OCI-LY7 (cell line): ENCODE measurements at regions of chr2 and their contacts with region 1.

Region 1: DNA sequence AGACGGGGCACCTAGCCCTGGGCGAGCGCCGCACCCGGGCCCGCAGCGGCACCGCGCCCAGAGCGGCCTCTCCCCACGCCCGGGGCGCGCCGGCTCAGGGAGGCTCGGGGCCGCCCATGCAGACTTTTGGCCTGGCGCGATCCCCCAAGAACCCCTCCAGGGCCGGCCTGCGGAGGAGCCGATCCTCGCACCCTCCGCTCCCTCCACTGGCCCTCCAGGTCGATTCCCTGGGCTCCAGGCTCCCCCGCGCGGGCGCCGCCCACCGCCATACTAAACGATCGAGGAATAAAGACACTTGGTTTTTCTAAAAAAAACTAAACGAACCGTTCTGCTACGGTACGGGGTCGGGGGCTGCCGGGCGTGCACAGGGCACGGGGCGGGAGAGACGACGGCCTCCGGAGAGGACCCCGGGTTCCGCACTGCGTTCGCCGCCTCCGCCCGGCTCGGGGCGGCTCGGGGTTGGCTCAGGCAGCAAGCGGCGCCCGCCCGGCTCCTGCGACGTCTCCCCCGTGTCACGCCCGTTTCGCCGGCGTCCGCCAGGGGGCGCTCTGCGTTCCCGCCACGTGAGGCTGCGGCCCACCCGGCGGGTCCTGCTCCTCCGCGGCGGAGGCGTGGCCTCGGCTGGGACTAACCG is 365 bp upstream of the KHK start:
- DNase-seq: peak; percentile 97
- H3K4me3 ChIP-seq: peak overlapping the region; percentile 73
- H3K27ac ChIP-seq: peak overlapping the region; percentile 38
- H3K4me1 ChIP-seq: peaks cover 46% of the 10 kb centered on the region
- CTCF ChIP-seq: peak; percentile 79

Region 2: DNA sequence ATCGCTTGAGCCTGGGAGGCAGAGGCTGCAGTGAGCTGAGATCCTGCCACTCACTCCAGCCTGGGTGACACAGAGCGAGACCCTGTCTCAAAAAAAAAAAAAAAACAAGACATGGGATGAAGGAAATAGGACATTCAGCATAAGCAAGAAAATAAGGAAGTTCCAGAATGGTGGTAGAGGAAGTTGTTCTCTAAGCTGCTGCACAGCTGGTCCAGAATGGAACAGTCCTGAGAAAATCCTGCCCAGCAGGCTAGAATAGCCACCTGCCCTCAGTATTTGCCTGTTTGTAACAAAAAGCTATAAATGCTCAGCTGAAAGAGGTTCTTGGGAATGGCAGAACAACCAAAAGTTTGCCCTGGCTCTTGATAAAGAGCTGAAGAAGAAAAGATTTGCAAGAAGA is 126.9 kb before region 1 on chr2:
- CTCF ChIA-PET with region 1: no interaction called
- POLR2A ChIA-PET with region 1: no interaction called
- intact Hi-C with region 1: loop called (anchors 2 kb)
- DNase-seq: no peak
- H3K4me3 ChIP-seq: no peak overlapping the region
- H3K27ac ChIP-seq: no peak overlapping the region
- H3K4me1 ChIP-seq: peaks cover 3% of the 10 kb centered on the region
- CTCF ChIP-seq: no peak

Region 3: GRCh38 chr2:27032495-27033252 is 53.5 kb before region 1 on chr2 and contains the start of gene TMEM214:
- CTCF ChIA-PET with region 1: no interaction called
- POLR2A ChIA-PET with region 1: no interaction called
- intact Hi-C with region 1: loop called (anchors 2 kb)
- DNase-seq: peak; percentile 87
- H3K4me3 ChIP-seq: peak within 1 kb of the TSS; percentile 95
- H3K27ac ChIP-seq: peak within 1 kb of the TSS; percentile 15
- H3K4me1 ChIP-seq: peaks cover 16% of the 10 kb centered on the region
- CTCF ChIP-seq: no peak
- total RNA-seq, gene TMEM214: 32.0 and 32.6 TPM in 2 replicates

Region 4: GRCh38 chr2:27059141-27059820 is 26.9 kb before region 1 on chr2:
- CTCF ChIA-PET with region 1: no interaction called
- POLR2A ChIA-PET with region 1: no interaction called
- intact Hi-C with region 1: no loop called
- DNase-seq: no peak
- H3K4me3 ChIP-seq: no peak overlapping the region
- H3K27ac ChIP-seq: no peak overlapping the region
- H3K4me1 ChIP-seq: no peaks in the 10 kb centered on the region
- CTCF ChIP-seq: no peak

Region 5: GRCh38 chr2:27071277-27071989 is 14.8 kb before region 1 on chr2 and contains the start of gene OST4:
- CTCF ChIA-PET with region 1: interaction called, 4 read pairs
- POLR2A ChIA-PET with region 1: interaction called, 9 read pairs
- intact Hi-C with region 1: loop called (anchors 1 kb)
- DNase-seq: peak; percentile 94
- H3K4me3 ChIP-seq: peak within 1 kb of the TSS; percentile 93
- H3K27ac ChIP-seq: peak within 1 kb of the TSS; percentile 53
- H3K4me1 ChIP-seq: peaks cover 56% of the 10 kb centered on the region
- CTCF ChIP-seq: peak; percentile 53
- total RNA-seq, gene OST4: 147 and 214 TPM in 2 replicates

Region 6: DNA sequence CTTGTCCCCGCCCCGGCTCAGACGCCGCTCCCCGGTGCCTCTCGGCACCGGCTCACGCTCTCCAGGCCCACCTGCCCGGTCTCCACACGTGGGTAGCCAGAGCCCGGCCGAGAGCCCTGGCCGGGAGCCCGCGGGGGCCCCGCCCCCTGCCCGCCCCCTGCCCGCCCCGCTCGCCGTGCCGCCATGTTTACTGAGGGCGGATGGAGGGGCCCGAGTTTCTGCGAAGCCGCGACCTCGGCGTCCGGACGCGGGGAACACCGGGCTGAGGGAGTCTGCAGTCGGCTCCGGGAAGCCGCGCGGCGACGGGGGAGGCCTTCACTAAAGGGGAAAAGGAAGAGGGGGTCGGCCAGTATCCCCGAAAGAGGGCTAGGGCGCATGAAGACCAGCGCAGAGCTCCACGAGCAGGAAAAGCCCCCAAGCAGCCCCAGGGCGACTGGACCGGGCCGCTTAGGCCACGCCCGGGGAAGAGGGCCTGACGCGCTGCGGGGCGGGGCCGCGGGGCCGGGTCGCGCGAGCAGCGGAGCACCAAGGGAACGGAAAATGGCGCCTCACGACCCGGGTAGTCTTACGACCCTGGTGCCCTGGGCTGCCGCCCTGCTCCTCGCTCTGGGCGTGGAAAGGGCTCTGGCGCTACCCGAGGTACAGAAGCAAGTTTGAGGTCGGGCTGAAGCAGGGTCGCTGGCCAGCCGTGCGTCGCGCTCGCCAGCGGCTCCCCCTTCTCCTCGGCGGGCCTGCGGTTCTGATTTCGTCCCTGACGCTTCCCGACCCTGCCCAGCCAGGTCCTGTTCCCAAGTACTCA is 125.8 kb after region 1 on chr2 and contains the starts of genes ATRAID and SLC5A6:
- CTCF ChIA-PET with region 1: no interaction called
- POLR2A ChIA-PET with region 1: no interaction called
- intact Hi-C with region 1: loop called (anchors 1 kb)
- DNase-seq: peak; percentile 92
- H3K4me3 ChIP-seq: peak within 1 kb of the TSS; percentile 90
- H3K27ac ChIP-seq: peak within 1 kb of the TSS; percentile 79
- H3K4me1 ChIP-seq: peaks cover 56% of the 10 kb centered on the region
- CTCF ChIP-seq: no peak
- total RNA-seq, gene ATRAID: 75.4 and 93.3 TPM in 2 replicates
- total RNA-seq, gene SLC5A6: 50.1 and 55.5 TPM in 2 replicates

Region 7: GRCh38 chr2:27754138-27754588 is 668.0 kb after region 1 on chr2:
- CTCF ChIA-PET with region 1: no interaction called
- POLR2A ChIA-PET with region 1: no interaction called
- intact Hi-C with region 1: no loop called
- DNase-seq: peak; percentile 60
- H3K4me3 ChIP-seq: no peak overlapping the region
- H3K27ac ChIP-seq: no peak overlapping the region
- H3K4me1 ChIP-seq: no peaks in the 10 kb centered on the region
- CTCF ChIP-seq: peak; percentile 87